Caco-2 (cell line): ENCODE measurements at regions of chr7 and their contacts with region 1.

Region 1: GRCh38 chr7:2314209-2314955 is at the start of gene SNX8:
- DNase-seq: peak; percentile 97 to 99
- H3K4me3 ChIP-seq: peak within 1 kb of the TSS; percentile 98
- H3K4me3 Mint-ChIP-seq: no peak within 1 kb of the TSS
- H3K27ac Mint-ChIP-seq: no peak within 1 kb of the TSS
- H3K4me1 ChIP-seq: peaks cover 28% of the 10 kb centered on the region
- H3K4me1 Mint-ChIP-seq: peaks cover 10% of the 10 kb centered on the region
- H3K27me3 ChIP-seq: no peaks in the 10 kb centered on the region
- H3K27me3 Mint-ChIP-seq: no peaks in the 10 kb centered on the region
- CTCF ChIP-seq: no peak
- total RNA-seq, gene SNX8: 82.0 and 86.6 TPM in 2 replicates

Region 2: DNA sequence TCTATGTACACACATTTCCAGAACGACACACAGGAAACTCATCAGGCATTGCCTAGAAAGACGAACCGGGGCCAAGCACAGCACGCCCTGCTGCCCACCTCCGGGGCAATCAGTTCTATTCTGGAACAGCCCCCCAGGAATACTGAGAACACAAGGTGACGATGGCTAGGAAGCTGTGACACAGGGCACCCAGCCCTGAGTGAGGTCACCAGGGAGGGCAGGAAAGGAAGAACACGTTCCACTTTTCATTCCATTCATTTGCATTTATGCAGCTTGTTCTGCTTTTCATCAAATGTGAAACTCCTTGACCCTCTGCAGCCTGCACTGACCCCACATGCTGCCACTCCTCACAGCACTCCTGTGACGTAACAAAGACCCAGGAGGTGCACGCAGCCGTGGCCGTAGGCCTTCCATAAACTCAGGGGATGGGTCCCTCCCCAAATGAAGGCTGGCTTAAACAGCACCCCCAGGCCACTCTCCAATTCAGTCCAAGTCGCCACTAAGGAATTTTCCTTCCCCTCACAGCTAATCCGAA is 110.5 kb before region 1 on chr7:
- CTCF ChIA-PET with region 1: no interaction called
- POLR2A ChIA-PET with region 1: no interaction called
- intact Hi-C with region 1: no loop called
- DNase-seq: peak in 1 of 2 experiments; percentile 37
- H3K4me3 ChIP-seq: no peak overlapping the region
- H3K4me3 Mint-ChIP-seq: no peak overlapping the region
- H3K27ac Mint-ChIP-seq: peak overlapping the region; percentile 69
- H3K4me1 ChIP-seq: peaks cover 17% of the 10 kb centered on the region
- H3K4me1 Mint-ChIP-seq: peaks cover 9% of the 10 kb centered on the region
- H3K27me3 ChIP-seq: no peaks in the 10 kb centered on the region
- H3K27me3 Mint-ChIP-seq: no peaks in the 10 kb centered on the region
- CTCF ChIP-seq: no peak

Region 3: DNA sequence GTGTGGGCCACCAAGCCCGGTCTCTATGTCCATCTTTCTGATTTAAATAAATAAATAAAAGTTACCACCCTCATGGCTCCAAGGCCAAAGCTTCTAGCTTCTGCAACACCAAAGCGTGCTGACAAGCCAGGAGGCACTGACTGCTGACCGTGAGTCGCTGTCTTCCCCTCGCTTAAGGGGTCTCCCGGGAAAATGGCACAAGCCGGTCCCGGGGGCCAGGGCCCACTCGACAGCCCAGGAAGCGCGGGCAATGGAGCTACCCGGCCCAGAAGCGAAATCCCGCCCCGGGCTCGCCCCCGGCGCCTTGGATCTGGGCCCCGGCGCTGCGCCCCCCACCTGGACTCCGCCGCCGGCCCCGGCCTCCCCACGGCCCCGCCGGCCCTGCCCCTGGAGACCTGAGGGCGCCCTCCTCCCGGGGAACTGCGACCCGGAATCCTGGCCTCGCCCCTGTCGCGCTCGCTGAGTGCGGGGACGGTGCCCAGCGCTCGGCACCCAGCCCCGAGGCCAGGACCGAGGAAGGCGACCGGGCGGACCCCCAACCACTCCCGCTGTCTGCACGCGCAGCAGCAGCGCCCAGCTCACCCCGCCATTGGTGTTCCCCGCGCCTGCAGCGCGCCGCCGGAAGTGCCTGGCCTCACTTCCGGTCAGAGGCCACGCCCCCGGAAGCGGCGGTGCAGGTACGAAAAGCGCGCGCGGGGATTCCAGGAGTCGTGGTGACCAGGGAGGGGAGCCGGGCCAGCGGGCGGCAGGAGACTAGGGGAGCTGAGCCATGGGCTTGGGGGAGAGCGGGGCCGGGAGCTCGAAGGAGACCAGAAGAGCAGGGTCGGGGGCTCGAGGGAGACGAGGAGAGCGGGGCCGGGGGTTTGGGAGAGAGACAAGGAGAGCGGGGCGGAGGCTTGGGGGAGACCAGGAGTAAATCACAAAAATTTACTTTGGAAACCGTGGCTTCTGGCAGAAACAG is 72.5 kb before region 1 on chr7 and contains the starts of genes MRM2 and NUDT1:
- CTCF ChIA-PET with region 1: interaction called, 3 read pairs
- POLR2A ChIA-PET with region 1: no interaction called
- intact Hi-C with region 1: loop called (anchors 5 kb)
- DNase-seq: peak; percentile 90 to 94
- H3K4me3 ChIP-seq: peak within 1 kb of the TSS; percentile 85
- H3K4me3 Mint-ChIP-seq: peak within 1 kb of the TSS; percentile 95
- H3K27ac Mint-ChIP-seq: peak within 1 kb of the TSS; percentile 96
- H3K4me1 ChIP-seq: peaks cover 5% of the 10 kb centered on the region; the same call in 1 of the 2 replicates
- H3K4me1 Mint-ChIP-seq: peaks cover 13% of the 10 kb centered on the region
- H3K27me3 ChIP-seq: no peaks in the 10 kb centered on the region
- H3K27me3 Mint-ChIP-seq: no peaks in the 10 kb centered on the region
- CTCF ChIP-seq: no peak
- total RNA-seq, gene MRM2: 48.8 and 49.3 TPM in 2 replicates
- total RNA-seq, gene NUDT1: 41.5 and 42.8 TPM in 2 replicates

Region 4: GRCh38 chr7:2281541-2281940 is 32.8 kb before region 1 on chr7:
- CTCF ChIA-PET with region 1: no interaction called
- POLR2A ChIA-PET with region 1: no interaction called
- intact Hi-C with region 1: loop called (anchors 1 kb)
- DNase-seq: no peak
- H3K4me3 ChIP-seq: no peak overlapping the region
- H3K4me3 Mint-ChIP-seq: no peak overlapping the region
- H3K27ac Mint-ChIP-seq: peak overlapping the region; percentile 67
- H3K4me1 ChIP-seq: peaks cover 45% of the 10 kb centered on the region
- H3K4me1 Mint-ChIP-seq: peaks cover 26% of the 10 kb centered on the region
- H3K27me3 ChIP-seq: no peaks in the 10 kb centered on the region
- H3K27me3 Mint-ChIP-seq: no peaks in the 10 kb centered on the region
- CTCF ChIP-seq: no peak

Region 5: DNA sequence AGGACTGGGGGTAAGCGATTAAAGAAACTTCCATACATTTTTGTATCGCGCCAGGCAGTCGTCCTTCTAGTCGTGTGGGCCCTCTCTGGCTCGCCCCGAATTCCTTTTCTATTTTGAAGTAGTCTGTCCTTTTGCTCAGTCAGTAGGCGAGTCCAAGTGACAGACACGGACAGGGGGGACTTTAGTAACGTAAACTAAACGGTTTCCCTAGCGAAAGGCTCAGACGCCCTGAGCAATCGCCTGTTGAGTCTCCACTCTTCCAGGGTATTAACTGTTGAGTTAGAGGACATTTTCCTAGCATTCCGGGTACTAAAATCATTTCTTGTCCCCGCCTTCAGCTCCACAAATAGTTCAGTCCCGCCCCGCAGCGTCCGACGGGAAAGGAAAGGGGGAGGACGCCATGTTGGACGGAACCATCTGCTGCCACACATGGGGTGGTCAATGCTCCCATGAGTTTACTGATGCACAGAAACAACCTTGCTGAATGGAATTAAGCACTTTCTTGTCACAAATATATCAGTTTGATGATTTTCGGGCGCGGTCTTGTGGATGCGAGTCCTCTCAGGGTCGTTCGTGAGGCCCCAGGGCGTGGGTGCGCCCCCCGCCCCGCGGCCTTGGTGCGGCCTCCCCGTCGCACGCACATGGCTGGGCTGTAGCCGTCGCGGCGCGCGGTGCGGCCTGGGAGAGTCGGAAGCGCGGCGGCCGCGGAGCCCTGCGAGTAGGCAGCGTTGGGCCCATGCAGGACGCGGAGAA is 40.0 kb after region 1 on chr7 and contains the start of gene EIF3B:
- CTCF ChIA-PET with region 1: no interaction called
- POLR2A ChIA-PET with region 1: interaction called, 3 read pairs
- intact Hi-C with region 1: loop called (anchors 5 kb)
- DNase-seq: peak; percentile 90 to 91
- H3K4me3 ChIP-seq: peak within 1 kb of the TSS; percentile 99
- H3K4me3 Mint-ChIP-seq: peak within 1 kb of the TSS; percentile 94
- H3K27ac Mint-ChIP-seq: peak within 1 kb of the TSS; percentile 100
- H3K4me1 ChIP-seq: no peaks in the 10 kb centered on the region
- H3K4me1 Mint-ChIP-seq: peaks cover 8% of the 10 kb centered on the region
- H3K27me3 ChIP-seq: no peaks in the 10 kb centered on the region
- H3K27me3 Mint-ChIP-seq: no peaks in the 10 kb centered on the region
- CTCF ChIP-seq: no peak
- total RNA-seq, gene EIF3B: 306 and 314 TPM in 2 replicates

Region 6: DNA sequence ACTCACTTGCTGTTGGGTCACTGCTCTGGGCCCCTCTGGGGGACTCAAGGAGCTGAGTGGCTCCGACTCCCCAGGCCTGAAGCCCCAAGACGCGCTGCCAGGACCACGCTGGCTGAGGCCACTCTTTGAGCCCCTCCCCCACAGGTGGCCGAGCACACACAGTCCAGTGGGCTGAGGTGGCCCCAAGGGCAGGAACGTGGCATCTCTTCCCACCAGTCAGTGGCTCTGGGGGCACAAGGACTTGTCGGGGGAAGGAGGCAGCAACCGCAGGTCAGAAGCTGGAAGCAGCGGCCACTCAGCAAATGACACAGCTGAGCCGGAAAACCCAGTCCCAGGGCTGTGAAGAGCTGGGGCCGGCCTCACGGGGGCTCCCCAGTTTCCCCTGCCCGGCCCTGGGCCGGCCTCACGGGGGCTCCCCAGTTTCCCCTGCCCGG is 137.7 kb after region 1 on chr7:
- CTCF ChIA-PET with region 1: no interaction called
- POLR2A ChIA-PET with region 1: no interaction called
- intact Hi-C with region 1: no loop called
- DNase-seq: peak in 1 of 2 experiments; percentile 44
- H3K4me3 ChIP-seq: peak overlapping the region; percentile 26
- H3K4me3 Mint-ChIP-seq: peak overlapping the region; percentile 70
- H3K27ac Mint-ChIP-seq: peak overlapping the region; percentile 72
- H3K4me1 ChIP-seq: peaks cover 6% of the 10 kb centered on the region
- H3K4me1 Mint-ChIP-seq: no peaks in the 10 kb centered on the region
- H3K27me3 ChIP-seq: no peaks in the 10 kb centered on the region
- H3K27me3 Mint-ChIP-seq: no peaks in the 10 kb centered on the region
- CTCF ChIP-seq: no peak